ENCODE measurements at regions of chrX and their contacts with region 1.

Region 1: GRCh38 chrX:129759576-129760061 is 20.1 kb upstream of the SASH3 start:
- DNase-seq: peak; percentile 57
- H3K4me3 Mint-ChIP-seq: peak overlapping the region; percentile 22
- H3K27ac Mint-ChIP-seq: peak overlapping the region; percentile 91
- H3K4me1 Mint-ChIP-seq: peaks cover 48% of the 10 kb centered on the region
- H3K27me3 Mint-ChIP-seq: no peaks in the 10 kb centered on the region

Region 2: GRCh38 chrX:129637217-129638109 is 122.2 kb before region 1 on chrX:
- intact Hi-C with region 1: no loop called
- DNase-seq: peak; percentile 48
- H3K4me3 Mint-ChIP-seq: no peak overlapping the region
- H3K27ac Mint-ChIP-seq: no peak overlapping the region
- H3K4me1 Mint-ChIP-seq: no peaks in the 10 kb centered on the region
- H3K27me3 Mint-ChIP-seq: no peaks in the 10 kb centered on the region

Region 3: GRCh38 chrX:129654419-129655165 is 105.0 kb before region 1 on chrX and contains the start of gene APLN:
- intact Hi-C with region 1: loop called (anchors 5 kb)
- DNase-seq: no peak
- H3K4me3 Mint-ChIP-seq: peak within 1 kb of the TSS; percentile 57
- H3K27ac Mint-ChIP-seq: no peak within 1 kb of the TSS
- H3K4me1 Mint-ChIP-seq: peaks cover 6% of the 10 kb centered on the region
- H3K27me3 Mint-ChIP-seq: peaks cover 16% of the 10 kb centered on the region
- total RNA-seq, gene APLN: 0.12 and 0.26 TPM in 2 replicates

Region 4: DNA sequence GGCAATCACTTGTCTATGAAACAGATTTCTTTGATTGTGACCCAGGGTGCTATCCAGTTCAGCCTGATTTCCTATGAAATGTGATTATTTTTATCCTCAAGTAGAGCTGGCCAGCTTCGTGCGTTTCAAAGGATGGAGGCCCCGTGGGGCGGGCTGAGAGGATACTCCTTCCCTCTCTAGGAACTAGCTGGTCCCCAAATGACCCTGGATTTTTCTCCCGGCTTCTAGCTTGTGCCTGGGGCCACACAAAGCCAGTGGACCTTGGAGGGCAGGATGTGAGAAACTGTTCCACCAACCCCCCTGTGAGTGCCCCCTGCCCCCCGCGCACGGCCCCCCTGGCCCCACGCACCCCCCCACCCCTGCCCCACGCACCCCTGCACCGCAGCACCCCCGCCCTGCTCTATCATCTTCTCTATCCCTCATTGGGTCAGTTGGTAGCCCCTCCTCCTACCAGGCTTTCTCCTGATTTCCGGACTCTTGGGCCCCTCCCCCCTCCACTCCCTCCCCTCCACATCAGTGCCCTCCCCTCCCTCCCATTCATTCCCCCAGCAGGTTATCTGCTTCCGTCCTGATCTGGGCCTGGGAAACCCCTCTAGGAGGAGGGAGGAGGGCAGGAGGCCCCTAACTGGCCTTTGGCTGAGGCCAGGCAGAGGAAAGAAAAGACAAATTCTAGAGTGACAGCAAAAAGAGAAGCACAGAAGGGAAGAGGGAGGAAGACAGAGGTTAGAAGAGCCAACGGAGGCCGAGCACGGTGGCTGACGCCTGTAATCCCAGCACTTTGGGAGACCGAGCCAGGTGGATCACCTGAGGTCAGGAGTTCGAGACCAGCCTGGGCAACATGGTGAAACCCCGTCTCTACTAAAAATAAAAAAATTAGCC is 17.5 kb before region 1 on chrX:
- intact Hi-C with region 1: loop called (anchors 2 kb)
- DNase-seq: no peak
- H3K4me3 Mint-ChIP-seq: no peak overlapping the region
- H3K27ac Mint-ChIP-seq: peak overlapping the region; percentile 84
- H3K4me1 Mint-ChIP-seq: peaks cover 50% of the 10 kb centered on the region
- H3K27me3 Mint-ChIP-seq: no peaks in the 10 kb centered on the region

Region 5: GRCh38 chrX:129772796-129773431 is 13.3 kb after region 1 on chrX:
- intact Hi-C with region 1: loop called (anchors 1 kb)
- DNase-seq: peak; percentile 32
- H3K4me3 Mint-ChIP-seq: peak overlapping the region; percentile 37
- H3K27ac Mint-ChIP-seq: peak overlapping the region; percentile 95
- H3K4me1 Mint-ChIP-seq: peaks cover 50% of the 10 kb centered on the region
- H3K27me3 Mint-ChIP-seq: no peaks in the 10 kb centered on the region

Region 6: DNA sequence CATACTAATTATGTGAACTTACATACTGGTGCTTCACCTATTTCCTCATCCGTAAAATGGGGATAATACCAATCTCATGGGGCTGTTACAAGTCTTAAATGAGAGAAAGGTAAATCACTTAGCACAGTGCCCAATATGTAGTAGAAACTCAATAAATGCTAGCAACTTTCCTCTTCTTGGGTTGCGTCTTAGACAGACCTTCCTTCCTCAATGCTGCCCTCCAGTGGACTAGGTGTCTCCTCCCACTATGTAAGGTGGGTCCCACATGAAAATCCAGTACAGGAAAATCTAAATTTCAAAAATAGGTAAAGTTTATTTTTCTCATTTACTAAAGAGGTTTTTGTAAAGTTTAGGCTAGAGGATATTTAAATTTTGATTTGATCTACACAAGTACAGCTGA is 63.5 kb after region 1 on chrX:
- intact Hi-C with region 1: loop called (anchors 1 kb)
- DNase-seq: peak; percentile 24
- H3K4me3 Mint-ChIP-seq: no peak overlapping the region
- H3K27ac Mint-ChIP-seq: no peak overlapping the region
- H3K4me1 Mint-ChIP-seq: peaks cover 18% of the 10 kb centered on the region
- H3K27me3 Mint-ChIP-seq: no peaks in the 10 kb centered on the region

Region 7: DNA sequence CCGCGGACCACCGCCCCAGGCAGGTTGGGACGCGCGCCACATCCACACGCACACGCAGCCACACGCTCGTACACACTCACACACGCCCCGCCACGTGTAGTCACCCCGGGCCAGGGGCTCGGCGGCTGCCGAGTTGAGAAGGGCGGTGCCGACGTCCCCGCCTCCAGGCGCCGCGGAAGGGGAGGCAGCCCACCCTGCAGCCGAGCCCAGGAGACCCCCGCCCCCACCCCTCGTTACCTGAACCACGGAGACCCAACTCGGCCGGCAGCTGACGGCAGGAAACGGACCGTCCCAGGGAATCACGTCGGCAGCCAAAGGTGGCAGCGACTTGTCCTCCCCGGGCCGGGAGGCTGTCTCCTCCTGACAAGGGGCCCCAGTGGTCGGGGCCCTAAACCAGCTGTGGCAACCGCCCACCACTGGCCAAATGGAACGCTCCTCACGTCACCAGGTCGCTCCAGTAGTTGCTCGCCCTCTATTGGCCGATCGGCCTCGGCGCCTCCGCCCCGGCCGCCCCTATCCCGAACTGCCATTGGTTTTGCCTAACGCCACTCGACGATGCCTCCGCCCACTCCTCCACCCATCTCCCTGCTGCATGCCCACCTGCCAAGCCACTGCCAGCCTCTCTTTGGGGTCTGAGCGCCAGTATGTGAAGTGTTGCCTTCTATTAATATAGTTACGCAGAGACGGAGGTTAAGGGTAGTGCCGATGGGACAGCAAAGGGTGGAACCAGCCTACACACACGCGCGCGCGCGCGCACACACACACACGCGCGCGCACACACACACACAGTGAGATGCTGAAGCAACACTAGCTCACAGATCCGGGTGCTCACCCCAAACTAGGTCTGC is 84.1 kb after region 1 on chrX and contains the start of gene ZDHHC9:
- intact Hi-C with region 1: loop called (anchors 5 kb)
- DNase-seq: peak; percentile 78
- H3K4me3 Mint-ChIP-seq: peak within 1 kb of the TSS; percentile 93
- H3K27ac Mint-ChIP-seq: peak within 1 kb of the TSS; percentile 88
- H3K4me1 Mint-ChIP-seq: peaks cover 28% of the 10 kb centered on the region
- H3K27me3 Mint-ChIP-seq: peaks cover 4% of the 10 kb centered on the region
- total RNA-seq, gene ZDHHC9: 13.6 and 14.2 TPM in 2 replicates

Region 8: GRCh38 chrX:129931411-129932015 is 171.9 kb after region 1 on chrX:
- intact Hi-C with region 1: no loop called
- DNase-seq: peak; percentile 52
- H3K4me3 Mint-ChIP-seq: peak overlapping the region; percentile 81
- H3K27ac Mint-ChIP-seq: peak overlapping the region; percentile 80
- H3K4me1 Mint-ChIP-seq: peaks cover 5% of the 10 kb centered on the region
- H3K27me3 Mint-ChIP-seq: peaks cover 9% of the 10 kb centered on the region